ENCODE measurements at regions of chr18 and their contacts with region 1.

Region 1: GRCh38 chr18:74495581-74496507 is at the start of gene CNDP2:
- DNase-seq: peak; percentile 99
- ATAC-seq: peak; percentile 91
- H3K4me3 ChIP-seq: peak within 1 kb of the TSS; percentile 71 to 73
- H3K27ac ChIP-seq: peak within 1 kb of the TSS; percentile 90
- H3K4me1 ChIP-seq: peaks cover 36% of the 10 kb centered on the region
- H3K27me3 ChIP-seq: no peaks in the 10 kb centered on the region
- CTCF ChIP-seq: no peak
- total RNA-seq, gene CNDP2: 310 TPM

Region 2: GRCh38 chr18:74281639-74282358 is 214.0 kb before region 1 on chr18:
- CTCF ChIA-PET with region 1: no interaction called
- POLR2A ChIA-PET with region 1: no interaction called
- in situ Hi-C with region 1: no loop called
- intact Hi-C with region 1: no loop called
- DNase-seq: no peak
- ATAC-seq: no peak
- H3K4me3 ChIP-seq: no peak overlapping the region
- H3K27ac ChIP-seq: no peak overlapping the region
- H3K4me1 ChIP-seq: no peaks in the 10 kb centered on the region
- H3K27me3 ChIP-seq: no peaks in the 10 kb centered on the region
- CTCF ChIP-seq: no peak

Region 3: GRCh38 chr18:74342416-74343043 is 153.3 kb before region 1 on chr18:
- CTCF ChIA-PET with region 1: interaction called, 10 read pairs
- POLR2A ChIA-PET with region 1: no interaction called
- in situ Hi-C with region 1: no loop called
- intact Hi-C with region 1: no loop called
- DNase-seq: peak; percentile 54
- ATAC-seq: peak; percentile 83
- H3K4me3 ChIP-seq: no peak overlapping the region
- H3K27ac ChIP-seq: no peak overlapping the region
- H3K4me1 ChIP-seq: no peaks in the 10 kb centered on the region
- H3K27me3 ChIP-seq: peaks cover 29% of the 10 kb centered on the region
- CTCF ChIP-seq: peak; percentile 78; the same call in 1 of the 2 replicates

Region 4: DNA sequence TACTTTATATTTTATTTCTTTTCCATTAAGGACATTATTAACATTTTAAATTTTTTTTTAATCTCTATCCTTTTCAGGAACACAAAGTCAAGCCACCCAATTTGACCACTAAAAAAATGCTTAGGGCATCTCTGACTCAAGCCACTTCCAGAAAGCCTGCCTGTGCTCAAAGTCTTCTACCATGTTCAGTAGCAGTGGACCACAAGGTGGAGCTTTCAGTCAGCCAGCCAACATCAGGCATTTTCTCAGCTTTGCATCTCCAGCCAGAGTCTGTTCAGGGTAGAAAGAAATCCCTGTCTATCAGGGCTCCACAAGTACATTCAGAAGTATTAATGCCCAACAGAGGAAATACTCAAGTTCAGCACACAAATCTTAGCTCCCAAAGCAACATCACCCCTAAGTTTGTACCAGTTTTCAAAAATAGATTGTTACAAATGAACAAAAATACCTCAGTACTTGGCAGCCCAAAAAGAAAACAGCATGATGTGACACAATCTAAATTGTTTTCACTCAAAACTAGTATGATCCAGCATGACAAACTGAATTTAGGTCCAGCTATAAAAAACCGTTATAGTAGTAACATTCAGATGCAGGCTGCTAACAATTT is 142.6 kb before region 1 on chr18:
- CTCF ChIA-PET with region 1: interaction called, 74 read pairs
- POLR2A ChIA-PET with region 1: no interaction called
- in situ Hi-C with region 1: no loop called
- intact Hi-C with region 1: loop called (anchors 1 kb)
- DNase-seq: peak; percentile 59
- ATAC-seq: peak; percentile 95
- H3K4me3 ChIP-seq: no peak overlapping the region
- H3K27ac ChIP-seq: no peak overlapping the region
- H3K4me1 ChIP-seq: no peaks in the 10 kb centered on the region
- H3K27me3 ChIP-seq: peaks cover 23% of the 10 kb centered on the region
- CTCF ChIP-seq: peak; percentile 91

Region 5: GRCh38 chr18:74506425-74507119 is 10.7 kb after region 1 on chr18:
- CTCF ChIA-PET with region 1: no interaction called
- POLR2A ChIA-PET with region 1: no interaction called
- in situ Hi-C with region 1: no loop called
- intact Hi-C with region 1: no loop called
- DNase-seq: no peak
- ATAC-seq: no peak
- H3K4me3 ChIP-seq: no peak overlapping the region
- H3K27ac ChIP-seq: no peak overlapping the region
- H3K4me1 ChIP-seq: no peaks in the 10 kb centered on the region
- H3K27me3 ChIP-seq: no peaks in the 10 kb centered on the region
- CTCF ChIP-seq: no peak

Region 6: GRCh38 chr18:74551936-74552555 is 56.2 kb after region 1 on chr18:
- CTCF ChIA-PET with region 1: interaction called, 27 read pairs
- POLR2A ChIA-PET with region 1: no interaction called
- in situ Hi-C with region 1: no loop called
- intact Hi-C with region 1: loop called (anchors 5 kb)
- DNase-seq: peak; percentile 80
- ATAC-seq: peak; percentile 100
- H3K4me3 ChIP-seq: no peak overlapping the region
- H3K27ac ChIP-seq: no peak overlapping the region
- H3K4me1 ChIP-seq: no peaks in the 10 kb centered on the region
- H3K27me3 ChIP-seq: 0 out of 2 replicates have a peak, but pooled peaks cover 4% of the 10 kb centered on the region
- CTCF ChIP-seq: no peak

Region 7: GRCh38 chr18:74773171-74773624 is 277.4 kb after region 1 on chr18:
- CTCF ChIA-PET with region 1: no interaction called
- POLR2A ChIA-PET with region 1: no interaction called
- in situ Hi-C with region 1: no loop called
- intact Hi-C with region 1: no loop called
- DNase-seq: no peak
- ATAC-seq: no peak
- H3K4me3 ChIP-seq: no peak overlapping the region
- H3K27ac ChIP-seq: no peak overlapping the region
- H3K4me1 ChIP-seq: no peaks in the 10 kb centered on the region
- H3K27me3 ChIP-seq: no peaks in the 10 kb centered on the region
- CTCF ChIP-seq: no peak

Measured in Panc1 (cell line).